IMR-90 (cell line): ENCODE measurements at regions of chr18 and their contacts with region 1.

Region 1: GRCh38 chr18:57881818-57882413 is 78.8 kb upstream of the ATP8B1 start:
- DNase-seq: peak; percentile 86
- ATAC-seq: peak; percentile 100
- H3K4me3 ChIP-seq: no peak overlapping the region
- H3K27ac ChIP-seq: no peak overlapping the region
- H3K4me1 ChIP-seq: no peaks in the 10 kb centered on the region
- H3K27me3 ChIP-seq: 0 out of 2 replicates have a peak, but pooled peaks cover 2% of the 10 kb centered on the region
- CTCF ChIP-seq: peak; percentile 97
- POLR2A ChIP-seq: 0 out of 2 replicates have a peak, but pooled peaks have one; percentile 25
- RAD21 ChIP-seq: peak; percentile 99

Region 2: GRCh38 chr18:57621246-57621604 is 260.7 kb before region 1 on chr18:
- CTCF ChIA-PET with region 1: no interaction called
- POLR2A ChIA-PET with region 1: no interaction called
- dilution Hi-C with region 1: no loop called
- in situ Hi-C with region 1: no loop called
- intact Hi-C with region 1: no loop called
- DNase-seq: no peak
- ATAC-seq: peak; percentile 48
- H3K4me3 ChIP-seq: peak overlapping the region; percentile 83
- H3K27ac ChIP-seq: peak overlapping the region; percentile 96
- H3K4me1 ChIP-seq: peaks cover 2% of the 10 kb centered on the region
- H3K27me3 ChIP-seq: no peaks in the 10 kb centered on the region
- CTCF ChIP-seq: no peak
- POLR2A ChIP-seq: no peak
- RAD21 ChIP-seq: no peak

Region 3: DNA sequence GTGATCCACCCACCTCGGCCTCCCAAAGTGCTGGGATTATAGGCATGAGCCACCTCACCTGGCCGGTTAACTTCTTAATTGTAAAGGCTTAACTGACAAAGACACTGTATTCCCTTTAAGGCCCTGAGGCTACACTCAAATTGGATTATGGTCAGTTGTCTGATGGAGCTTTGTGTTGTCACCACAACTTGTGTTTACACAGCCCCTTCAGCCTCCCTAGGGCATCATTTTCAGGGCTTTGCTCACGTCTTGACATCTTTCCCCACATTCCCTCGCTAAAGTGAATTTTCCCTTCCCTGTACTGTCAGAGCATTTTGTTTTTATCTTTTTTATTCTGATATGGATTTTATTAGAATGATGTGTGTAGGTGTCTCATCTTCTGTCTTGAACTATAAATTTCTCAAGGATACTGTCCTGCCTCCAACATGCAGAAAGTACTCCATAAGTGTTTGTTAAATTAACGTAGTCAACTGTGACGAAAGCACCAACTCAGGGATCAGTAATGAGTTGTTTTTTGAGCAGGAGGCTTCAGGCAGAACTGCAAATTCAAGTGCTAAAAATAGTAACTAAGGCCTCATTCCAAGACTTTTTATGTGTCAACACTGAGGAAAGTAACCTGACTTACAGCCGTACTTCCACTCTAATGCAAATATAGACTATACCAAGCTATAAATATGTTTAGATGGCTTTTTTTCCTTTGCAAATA is 183.2 kb before region 1 on chr18:
- CTCF ChIA-PET with region 1: no interaction called
- POLR2A ChIA-PET with region 1: no interaction called
- dilution Hi-C with region 1: no loop called
- in situ Hi-C with region 1: no loop called
- intact Hi-C with region 1: no loop called
- DNase-seq: peak; percentile 74
- ATAC-seq: peak; percentile 54
- H3K4me3 ChIP-seq: no peak overlapping the region
- H3K27ac ChIP-seq: no peak overlapping the region
- H3K4me1 ChIP-seq: peaks cover 5% of the 10 kb centered on the region; the same call in 1 of the 2 replicates
- H3K27me3 ChIP-seq: no peaks in the 10 kb centered on the region
- CTCF ChIP-seq: no peak
- POLR2A ChIP-seq: no peak
- RAD21 ChIP-seq: no peak

Region 4: GRCh38 chr18:58117786-58118403 is 236.0 kb after region 1 on chr18:
- CTCF ChIA-PET with region 1: interaction called, 12 read pairs
- POLR2A ChIA-PET with region 1: no interaction called
- dilution Hi-C with region 1: no loop called
- in situ Hi-C with region 1: loop called (anchors 5 kb)
- intact Hi-C with region 1: loop called (anchors 1 kb)
- DNase-seq: peak; percentile 98
- ATAC-seq: peak; percentile 79
- H3K4me3 ChIP-seq: no peak overlapping the region
- H3K27ac ChIP-seq: no peak overlapping the region
- H3K4me1 ChIP-seq: peaks cover 8% of the 10 kb centered on the region
- H3K27me3 ChIP-seq: no peaks in the 10 kb centered on the region
- CTCF ChIP-seq: no peak
- POLR2A ChIP-seq: no peak
- RAD21 ChIP-seq: no peak

Region 5: DNA sequence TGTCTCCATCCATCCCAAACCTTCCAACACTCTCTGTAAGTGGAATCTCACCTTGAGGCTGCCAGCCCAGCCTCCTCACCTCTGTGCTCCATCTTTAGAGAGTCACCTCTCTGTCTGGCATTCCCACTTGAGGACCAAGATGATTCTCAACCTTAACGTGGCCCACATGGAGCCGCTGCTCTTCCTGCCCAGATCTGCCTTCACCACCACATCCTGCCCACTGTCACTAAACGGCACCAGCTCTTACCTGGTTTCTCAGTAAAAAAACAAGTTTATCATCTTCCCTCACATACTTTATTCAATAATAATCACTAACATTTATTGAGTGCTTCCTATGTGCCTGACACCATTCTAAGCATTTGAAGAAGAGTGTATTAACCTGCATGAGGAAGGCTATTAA is 242.6 kb after region 1 on chr18:
- CTCF ChIA-PET with region 1: interaction called, 12 read pairs
- POLR2A ChIA-PET with region 1: no interaction called
- dilution Hi-C with region 1: no loop called
- in situ Hi-C with region 1: loop called (anchors 5 kb)
- intact Hi-C with region 1: loop called (anchors 1 kb)
- DNase-seq: no peak
- ATAC-seq: no peak
- H3K4me3 ChIP-seq: no peak overlapping the region
- H3K27ac ChIP-seq: no peak overlapping the region
- H3K4me1 ChIP-seq: peaks cover 7% of the 10 kb centered on the region; the same call in 1 of the 2 replicates
- H3K27me3 ChIP-seq: no peaks in the 10 kb centered on the region
- CTCF ChIP-seq: no peak
- POLR2A ChIP-seq: no peak
- RAD21 ChIP-seq: no peak

Region 6: DNA sequence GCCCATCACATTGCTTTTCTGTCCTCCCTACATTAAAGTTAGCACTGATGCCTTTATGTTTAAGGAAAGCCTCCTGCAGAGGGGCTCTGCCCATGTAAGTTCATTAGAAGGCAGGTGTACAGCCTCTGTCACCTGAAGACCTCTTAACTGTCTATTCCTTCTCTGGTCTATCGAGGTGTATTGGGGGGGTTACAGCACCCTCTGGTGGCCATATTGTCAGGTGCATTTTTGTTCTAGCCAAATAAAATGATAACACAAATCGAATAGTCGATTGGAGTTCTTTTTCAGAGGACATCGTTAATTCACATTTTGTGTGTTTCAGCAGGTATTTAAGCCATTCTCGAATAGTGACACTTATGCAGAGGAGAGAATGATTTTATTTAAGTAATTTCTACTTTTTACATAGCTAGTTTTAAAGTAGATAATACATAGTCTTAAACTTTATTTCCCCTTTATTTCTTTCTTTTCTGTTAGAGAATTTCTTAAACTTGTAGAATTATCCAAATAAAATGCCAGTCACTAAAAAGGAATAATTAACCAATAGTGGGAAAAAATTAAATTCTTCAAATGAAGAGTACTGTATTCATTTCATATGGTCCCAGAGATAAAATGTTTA is 298.9 kb after region 1 on chr18:
- CTCF ChIA-PET with region 1: no interaction called
- POLR2A ChIA-PET with region 1: no interaction called
- dilution Hi-C with region 1: no loop called
- in situ Hi-C with region 1: no loop called
- intact Hi-C with region 1: loop called (anchors 1 kb)
- DNase-seq: peak; percentile 47
- ATAC-seq: no peak
- H3K4me3 ChIP-seq: no peak overlapping the region
- H3K27ac ChIP-seq: no peak overlapping the region
- H3K4me1 ChIP-seq: peaks cover 23% of the 10 kb centered on the region
- H3K27me3 ChIP-seq: no peaks in the 10 kb centered on the region
- CTCF ChIP-seq: peak; percentile 77
- POLR2A ChIP-seq: no peak
- RAD21 ChIP-seq: peak; percentile 70

Region 7: DNA sequence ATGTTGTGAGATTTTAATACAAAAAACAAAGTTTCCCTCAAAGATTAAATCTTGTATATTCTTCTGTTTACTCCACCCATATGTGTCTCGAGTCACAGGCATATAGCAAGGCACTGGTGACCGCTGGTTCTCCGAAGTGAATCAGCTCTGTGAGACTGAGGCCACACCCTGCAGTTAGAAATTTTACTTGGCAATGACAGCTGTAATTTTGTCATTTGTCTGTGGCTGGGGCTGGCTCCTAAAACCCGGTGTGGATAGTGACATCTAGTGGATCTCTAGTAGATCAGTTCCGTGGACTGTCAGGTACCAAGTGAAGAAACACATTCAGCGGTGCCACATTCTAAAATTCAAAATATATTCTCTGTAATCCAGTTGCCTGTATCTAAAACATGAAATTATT is 440.1 kb after region 1 on chr18:
- CTCF ChIA-PET with region 1: no interaction called
- POLR2A ChIA-PET with region 1: no interaction called
- dilution Hi-C with region 1: no loop called
- in situ Hi-C with region 1: no loop called
- intact Hi-C with region 1: loop called (anchors 5 kb)
- DNase-seq: peak; percentile 74
- ATAC-seq: peak; percentile 91
- H3K4me3 ChIP-seq: no peak overlapping the region
- H3K27ac ChIP-seq: no peak overlapping the region
- H3K4me1 ChIP-seq: peaks cover 6% of the 10 kb centered on the region; the same call in 1 of the 2 replicates
- H3K27me3 ChIP-seq: no peaks in the 10 kb centered on the region
- CTCF ChIP-seq: peak; percentile 62
- POLR2A ChIP-seq: no peak
- RAD21 ChIP-seq: peak; percentile 88

Region 8: GRCh38 chr18:58493516-58494253 is 611.8 kb after region 1 on chr18:
- CTCF ChIA-PET with region 1: no interaction called
- POLR2A ChIA-PET with region 1: no interaction called
- dilution Hi-C with region 1: no loop called
- in situ Hi-C with region 1: loop called (anchors 25 kb)
- intact Hi-C with region 1: loop called (anchors 5 kb)
- DNase-seq: peak; percentile 84
- ATAC-seq: peak; percentile 89
- H3K4me3 ChIP-seq: no peak overlapping the region
- H3K27ac ChIP-seq: no peak overlapping the region
- H3K4me1 ChIP-seq: peaks cover 7% of the 10 kb centered on the region; the same call in 1 of the 2 replicates
- H3K27me3 ChIP-seq: no peaks in the 10 kb centered on the region
- CTCF ChIP-seq: peak; percentile 88
- POLR2A ChIP-seq: no peak
- RAD21 ChIP-seq: peak; percentile 83

Region 9: GRCh38 chr18:58761241-58761969 is 879.5 kb after region 1 on chr18:
- CTCF ChIA-PET with region 1: no interaction called
- POLR2A ChIA-PET with region 1: no interaction called
- dilution Hi-C with region 1: no loop called
- in situ Hi-C with region 1: no loop called
- intact Hi-C with region 1: loop called (anchors 5 kb)
- DNase-seq: peak; percentile 40
- ATAC-seq: no peak
- H3K4me3 ChIP-seq: no peak overlapping the region
- H3K27ac ChIP-seq: no peak overlapping the region
- H3K4me1 ChIP-seq: no peaks in the 10 kb centered on the region
- H3K27me3 ChIP-seq: peaks cover 14% of the 10 kb centered on the region
- CTCF ChIP-seq: no peak
- POLR2A ChIP-seq: no peak
- RAD21 ChIP-seq: no peak